H1 (cell line): ENCODE measurements at regions of chr15 and their contacts with region 1.

Region 1: GRCh38 chr15:42710662-42711061 is 26.3 kb downstream of the CDAN1 start:
- DNase-seq: no peak
- H3K4me3 ChIP-seq: no peak overlapping the region
- H3K27ac ChIP-seq: no peak overlapping the region
- H3K4me1 ChIP-seq: no peaks in the 10 kb centered on the region
- H3K27me3 ChIP-seq: no peaks in the 10 kb centered on the region
- CTCF ChIP-seq: no peak
- EP300 ChIP-seq: no peak
- POLR2A ChIP-seq: no peak
- RAD21 ChIP-seq: no peak

Region 2: GRCh38 chr15:42650208-42651066 is 60.2 kb before region 1 on chr15:
- CTCF ChIA-PET with region 1: no interaction called
- POLR2A ChIA-PET with region 1: no interaction called
- DNase-seq: peak; percentile 13 to 71
- H3K4me3 ChIP-seq: no peak overlapping the region
- H3K27ac ChIP-seq: no peak overlapping the region
- H3K4me1 ChIP-seq: no peaks in the 10 kb centered on the region
- H3K27me3 ChIP-seq: no peaks in the 10 kb centered on the region
- CTCF ChIP-seq: peak; percentile 46 to 83 (median 66)
- EP300 ChIP-seq: no peak
- POLR2A ChIP-seq: no peak
- RAD21 ChIP-seq: peak; percentile 94 to 95

Region 3: DNA sequence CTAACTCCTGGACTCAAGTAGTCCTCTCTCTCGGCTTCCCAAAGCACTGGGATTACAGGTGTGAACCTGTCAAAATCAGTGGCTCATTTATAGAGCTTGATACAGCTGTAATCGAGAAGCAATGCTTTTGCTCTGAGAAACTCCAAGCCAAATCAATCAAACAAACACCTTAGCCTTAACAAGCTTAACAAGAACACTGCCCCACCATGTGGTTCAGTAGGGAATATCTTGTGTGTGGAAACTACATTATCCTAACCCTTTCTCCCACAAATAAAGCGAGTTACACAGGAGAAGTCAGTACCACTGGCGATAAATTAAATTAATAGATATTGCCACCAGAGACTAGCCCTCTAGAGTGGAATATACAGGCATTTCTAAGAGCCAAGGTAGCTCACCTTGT is 12.4 kb after region 1 on chr15:
- CTCF ChIA-PET with region 1: interaction called, 31 read pairs
- POLR2A ChIA-PET with region 1: interaction called, 3 read pairs
- DNase-seq: no peak
- H3K4me3 ChIP-seq: no peak overlapping the region
- H3K27ac ChIP-seq: no peak overlapping the region
- H3K4me1 ChIP-seq: no peaks in the 10 kb centered on the region
- H3K27me3 ChIP-seq: no peaks in the 10 kb centered on the region
- CTCF ChIP-seq: peak in 2 of 3 experiments; percentile 15 to 24; a peak in 2 of 4 replicates
- EP300 ChIP-seq: no peak
- POLR2A ChIP-seq: no peak
- RAD21 ChIP-seq: peak; percentile 22 to 25

Region 4: DNA sequence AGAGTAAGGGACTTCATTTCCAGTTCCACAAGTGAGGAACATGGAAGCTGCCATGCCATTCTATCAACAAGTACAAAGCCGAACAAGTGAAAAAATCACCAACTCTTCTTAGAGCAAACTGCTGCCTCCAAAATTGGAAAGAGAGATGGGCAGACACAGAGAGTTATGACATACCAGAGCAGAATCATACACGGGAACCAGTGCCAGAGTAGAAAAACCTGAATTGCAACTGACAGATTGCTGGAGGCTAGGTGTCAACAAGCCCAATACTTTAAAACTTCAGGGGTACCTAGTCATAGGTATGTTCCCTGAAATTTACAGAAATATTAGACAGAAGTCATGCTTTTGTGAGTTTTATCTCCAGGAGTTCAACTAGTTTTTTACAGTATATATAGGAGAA is 147.9 kb after region 1 on chr15:
- CTCF ChIA-PET with region 1: no interaction called
- POLR2A ChIA-PET with region 1: no interaction called
- DNase-seq: no peak
- H3K4me3 ChIP-seq: no peak overlapping the region
- H3K27ac ChIP-seq: no peak overlapping the region
- H3K4me1 ChIP-seq: no peaks in the 10 kb centered on the region
- H3K27me3 ChIP-seq: no peaks in the 10 kb centered on the region
- CTCF ChIP-seq: no peak
- EP300 ChIP-seq: no peak
- POLR2A ChIP-seq: no peak
- RAD21 ChIP-seq: no peak